Left cardiac atrium (tissue), 4 donors: ENCODE measurements at regions of chr7 and their contacts with region 1.

Region 1: GRCh38 chr7:106736508-106737201 is 75.7 kb upstream of the CCDC71L start:
- DNase-seq: peak; percentile 21
- ATAC-seq: peak; percentile 86 to 91

Region 2: GRCh38 chr7:106542550-106543220 is 194.0 kb before region 1 on chr7:
- intact Hi-C with region 1: loop called in 1 of 2 experiments (anchors 2 kb)
- DNase-seq: peak; percentile 65
- ATAC-seq: peak; percentile 92 to 95

Region 3: GRCh38 chr7:106583101-106583500 is 153.6 kb before region 1 on chr7:
- intact Hi-C with region 1: no loop called
- DNase-seq: no peak
- ATAC-seq: no peak

Region 4: GRCh38 chr7:106659963-106660861 is 76.4 kb before region 1 on chr7:
- intact Hi-C with region 1: loop called in 1 of 2 experiments (anchors 5 kb)
- DNase-seq: peak; percentile 83
- ATAC-seq: peak; percentile 75

Region 5: DNA sequence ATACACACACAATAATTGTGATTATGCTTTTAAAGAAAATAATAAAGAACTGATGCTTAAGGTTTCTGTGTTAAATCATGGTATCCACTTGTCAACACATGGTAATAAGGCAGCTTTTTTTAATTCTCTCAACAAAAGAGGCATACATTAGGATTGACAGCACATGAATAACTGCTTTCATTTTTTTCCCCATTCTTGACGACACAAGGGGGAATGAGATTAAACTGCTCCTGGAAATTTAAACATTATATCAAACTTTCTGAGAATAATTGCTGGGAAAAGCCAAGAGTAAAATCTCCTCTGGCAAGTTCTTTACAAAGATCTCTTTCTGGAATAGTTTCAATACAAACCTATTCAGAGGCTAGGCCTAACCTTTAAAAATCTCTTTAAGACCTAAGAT is 634.2 kb after region 1 on chr7:
- intact Hi-C with region 1: no loop called
- DNase-seq: no peak
- ATAC-seq: no peak